OCI-LY7 (cell line): ENCODE measurements at regions of chr6 and their contacts with region 1.

Region 1: GRCh38 chr6:28606424-28607400 is 81.0 kb downstream of the GPX5 start:
- DNase-seq: peak; percentile 95
- H3K4me3 ChIP-seq: peak overlapping the region; percentile 64
- H3K27ac ChIP-seq: peak overlapping the region; percentile 80
- H3K4me1 ChIP-seq: peaks cover 25% of the 10 kb centered on the region
- CTCF ChIP-seq: peak; percentile 62

Region 2: GRCh38 chr6:28182255-28182654 is 424.5 kb before region 1 on chr6:
- CTCF ChIA-PET with region 1: no interaction called
- POLR2A ChIA-PET with region 1: interaction called, 13 read pairs
- intact Hi-C with region 1: no loop called
- DNase-seq: no peak
- H3K4me3 ChIP-seq: no peak overlapping the region
- H3K27ac ChIP-seq: no peak overlapping the region
- H3K4me1 ChIP-seq: no peaks in the 10 kb centered on the region
- CTCF ChIP-seq: no peak

Region 3: DNA sequence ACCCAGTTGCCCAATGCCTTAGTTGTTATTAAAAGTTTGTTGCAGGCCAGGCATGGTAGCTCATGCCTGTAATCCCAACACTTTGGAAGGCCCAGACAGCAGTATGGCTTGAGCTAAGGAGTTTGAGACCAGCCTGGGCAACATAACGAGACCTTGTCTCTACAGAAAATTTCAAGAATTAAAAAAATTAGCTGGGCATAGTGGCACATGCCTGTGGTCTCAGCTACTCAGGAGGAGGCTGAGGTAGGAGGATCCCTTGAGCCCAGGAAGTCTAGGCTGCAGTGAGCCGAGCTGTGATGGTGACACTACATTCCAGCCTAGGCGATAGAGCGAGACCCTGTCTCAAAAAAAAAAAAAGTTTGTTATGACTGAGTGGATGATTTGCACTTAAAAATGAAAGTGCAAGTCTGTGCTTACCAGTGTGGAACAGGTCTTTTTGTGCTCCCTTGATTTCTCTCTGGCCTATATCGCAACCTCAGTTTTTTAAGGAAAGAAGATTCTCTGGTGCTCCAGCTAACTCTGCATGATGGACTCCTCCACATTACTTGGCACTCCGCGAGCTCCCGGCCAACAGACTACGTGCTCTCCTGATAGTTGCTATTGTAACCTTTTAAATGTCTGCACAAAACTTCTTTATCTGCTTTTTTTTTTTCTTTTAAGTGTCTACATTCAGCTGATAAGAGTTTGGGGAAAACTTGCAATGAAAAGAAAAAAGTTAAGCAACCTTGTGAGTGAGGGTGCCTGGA is 234.8 kb before region 1 on chr6:
- CTCF ChIA-PET with region 1: no interaction called
- POLR2A ChIA-PET with region 1: no interaction called
- intact Hi-C with region 1: no loop called
- DNase-seq: peak; percentile 19
- H3K4me3 ChIP-seq: no peak overlapping the region
- H3K27ac ChIP-seq: no peak overlapping the region
- H3K4me1 ChIP-seq: peaks cover 7% of the 10 kb centered on the region
- CTCF ChIP-seq: no peak

Region 4: DNA sequence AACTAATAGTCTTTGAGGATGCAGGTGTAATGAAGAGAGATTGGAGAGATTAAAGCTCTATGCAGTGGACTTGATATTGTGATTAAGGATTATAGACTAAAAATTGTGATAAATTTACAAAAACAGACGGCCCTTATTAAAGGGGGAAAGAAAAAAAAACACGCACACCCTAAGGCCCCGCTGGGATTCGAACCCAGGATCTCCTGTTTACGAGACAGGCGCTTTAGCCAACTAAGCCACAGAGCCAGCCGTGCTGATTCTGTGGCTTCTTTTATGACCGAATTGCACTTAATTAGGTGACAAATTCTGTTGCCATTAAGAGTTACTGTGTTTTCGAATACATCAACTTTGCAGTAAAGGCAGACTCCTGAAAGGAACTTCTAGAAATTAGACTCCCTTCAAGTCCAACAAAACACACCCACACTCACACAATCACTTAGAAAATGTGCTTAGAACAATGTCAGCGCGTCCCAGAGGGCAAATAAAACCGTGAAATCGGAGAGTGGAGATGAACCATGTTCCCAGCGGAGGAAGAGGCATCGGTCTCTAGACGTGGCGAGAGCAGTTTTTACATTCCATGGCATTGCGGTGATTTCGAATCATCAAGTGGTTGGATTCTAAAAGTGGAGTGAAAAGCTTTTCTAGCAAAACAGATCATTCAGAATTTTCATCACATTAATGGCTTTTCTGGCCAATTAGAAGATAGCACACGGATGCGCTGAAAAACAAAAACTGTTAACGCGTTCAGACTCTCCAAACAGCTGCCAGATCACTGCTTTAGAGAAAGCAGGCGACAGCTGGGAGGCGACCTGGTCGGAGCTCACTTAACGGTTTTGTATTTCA is 41.5 kb after region 1 on chr6:
- CTCF ChIA-PET with region 1: no interaction called
- POLR2A ChIA-PET with region 1: interaction called, 4 read pairs
- intact Hi-C with region 1: loop called (anchors 2 kb)
- DNase-seq: peak; percentile 89
- H3K4me3 ChIP-seq: peak overlapping the region; percentile 96
- H3K27ac ChIP-seq: peak overlapping the region; percentile 85
- H3K4me1 ChIP-seq: peaks cover 9% of the 10 kb centered on the region
- CTCF ChIP-seq: no peak

Region 5: GRCh38 chr6:28657769-28658465 is 51.2 kb after region 1 on chr6:
- CTCF ChIA-PET with region 1: no interaction called
- POLR2A ChIA-PET with region 1: interaction called, 4 read pairs
- intact Hi-C with region 1: loop called (anchors 2 kb)
- DNase-seq: peak; percentile 78
- H3K4me3 ChIP-seq: peak overlapping the region; percentile 82
- H3K27ac ChIP-seq: peak overlapping the region; percentile 16
- H3K4me1 ChIP-seq: peaks cover 18% of the 10 kb centered on the region
- CTCF ChIP-seq: no peak

Region 6: DNA sequence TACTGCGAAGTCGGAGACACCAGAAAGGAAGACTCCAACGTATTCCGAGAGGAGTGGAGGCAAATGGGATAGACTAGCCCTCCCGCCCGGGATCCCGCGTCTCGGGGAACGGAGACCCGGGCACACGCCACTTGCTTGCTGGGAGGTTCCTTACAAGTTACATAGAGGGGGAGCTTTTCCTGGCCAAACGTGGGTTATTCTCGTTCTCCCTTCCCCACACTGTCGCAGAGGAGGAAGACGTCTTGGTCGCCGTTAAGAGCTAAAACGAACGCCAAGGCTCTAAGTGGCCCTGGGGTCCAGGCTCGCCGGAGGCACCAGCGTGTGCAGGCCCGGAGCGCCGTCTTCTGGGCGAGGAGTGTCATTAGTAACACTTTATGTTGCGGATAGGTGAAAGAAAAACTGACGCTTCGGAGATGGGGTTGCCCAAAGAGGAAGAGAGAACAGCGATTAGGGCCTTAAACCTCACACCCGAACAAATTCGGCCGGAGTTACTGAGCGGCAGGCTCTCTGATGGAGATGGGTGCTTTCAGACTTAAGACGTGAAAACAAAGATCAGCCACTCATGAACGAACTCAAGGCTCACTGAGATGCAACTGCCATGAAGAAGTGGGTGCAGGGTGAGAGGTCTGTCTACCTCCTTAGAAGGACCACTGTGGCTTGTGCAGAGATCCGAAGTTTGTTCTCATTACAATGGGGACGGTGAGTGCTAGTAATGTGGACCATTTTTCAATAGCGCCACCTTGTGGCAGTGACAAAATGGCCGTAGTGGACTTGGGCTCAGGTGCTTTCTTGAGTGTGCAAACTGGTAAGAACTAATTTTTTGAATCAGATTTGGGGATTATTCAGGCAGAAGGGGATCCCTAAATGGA is 410.1 kb after region 1 on chr6:
- CTCF ChIA-PET with region 1: no interaction called
- POLR2A ChIA-PET with region 1: no interaction called
- intact Hi-C with region 1: no loop called
- DNase-seq: peak; percentile 90
- H3K4me3 ChIP-seq: peak overlapping the region; percentile 67
- H3K27ac ChIP-seq: peak overlapping the region; percentile 56
- H3K4me1 ChIP-seq: no peaks in the 10 kb centered on the region
- CTCF ChIP-seq: peak; percentile 97